H1 (cell line): ENCODE measurements at regions of chr10 and their contacts with region 1.

Region 1: GRCh38 chr10:105010411-105011121 is 369.5 kb downstream of the SORCS3 start:
- DNase-seq: no peak
- H3K4me3 ChIP-seq: no peak overlapping the region
- H3K27ac ChIP-seq: no peak overlapping the region
- H3K4me1 ChIP-seq: no peaks in the 10 kb centered on the region; a peak in 1 of 7 replicates
- H3K27me3 ChIP-seq: no peaks in the 10 kb centered on the region
- CTCF ChIP-seq: no peak
- EP300 ChIP-seq: no peak
- POLR2A ChIP-seq: no peak
- RAD21 ChIP-seq: no peak

Region 2: GRCh38 chr10:104880624-104881398 is 129.8 kb before region 1 on chr10:
- CTCF ChIA-PET with region 1: no interaction called
- POLR2A ChIA-PET with region 1: no interaction called
- DNase-seq: no peak
- H3K4me3 ChIP-seq: no peak overlapping the region
- H3K27ac ChIP-seq: no peak overlapping the region
- H3K4me1 ChIP-seq: no peaks in the 10 kb centered on the region
- H3K27me3 ChIP-seq: no peaks in the 10 kb centered on the region
- CTCF ChIP-seq: no peak
- EP300 ChIP-seq: no peak
- POLR2A ChIP-seq: no peak
- RAD21 ChIP-seq: no peak

Region 3: DNA sequence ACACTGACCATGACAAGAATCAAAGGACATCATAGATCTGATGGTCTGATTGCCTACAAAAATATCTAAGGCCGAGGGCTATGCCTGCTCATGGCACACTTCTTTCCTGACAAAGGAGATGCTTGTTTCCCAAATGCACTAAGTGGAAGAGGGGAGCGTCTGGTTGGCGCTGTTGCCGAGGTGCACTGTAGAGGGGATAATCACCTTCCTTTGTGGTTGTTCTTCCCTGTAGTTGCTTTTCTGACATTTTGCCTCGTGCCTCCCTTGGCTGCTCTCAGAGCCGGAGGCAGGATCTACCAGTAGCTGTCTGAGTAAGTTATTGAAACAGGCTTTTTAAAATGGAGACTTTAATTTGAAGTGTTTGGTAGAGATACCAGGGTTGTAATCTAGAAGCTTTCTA is 17.5 kb before region 1 on chr10:
- CTCF ChIA-PET with region 1: interaction called, 11 read pairs
- POLR2A ChIA-PET with region 1: no interaction called
- DNase-seq: no peak
- H3K4me3 ChIP-seq: no peak overlapping the region
- H3K27ac ChIP-seq: no peak overlapping the region
- H3K4me1 ChIP-seq: peaks cover 0 to 6% (median 2%) of the 10 kb centered on the region in 4 experiments; a peak in 5 of 7 replicates
- H3K27me3 ChIP-seq: no peaks in the 10 kb centered on the region
- CTCF ChIP-seq: no peak
- EP300 ChIP-seq: no peak
- POLR2A ChIP-seq: no peak
- RAD21 ChIP-seq: no peak